ENCODE measurements at regions of chr2 and their contacts with region 1.

Region 1: DNA sequence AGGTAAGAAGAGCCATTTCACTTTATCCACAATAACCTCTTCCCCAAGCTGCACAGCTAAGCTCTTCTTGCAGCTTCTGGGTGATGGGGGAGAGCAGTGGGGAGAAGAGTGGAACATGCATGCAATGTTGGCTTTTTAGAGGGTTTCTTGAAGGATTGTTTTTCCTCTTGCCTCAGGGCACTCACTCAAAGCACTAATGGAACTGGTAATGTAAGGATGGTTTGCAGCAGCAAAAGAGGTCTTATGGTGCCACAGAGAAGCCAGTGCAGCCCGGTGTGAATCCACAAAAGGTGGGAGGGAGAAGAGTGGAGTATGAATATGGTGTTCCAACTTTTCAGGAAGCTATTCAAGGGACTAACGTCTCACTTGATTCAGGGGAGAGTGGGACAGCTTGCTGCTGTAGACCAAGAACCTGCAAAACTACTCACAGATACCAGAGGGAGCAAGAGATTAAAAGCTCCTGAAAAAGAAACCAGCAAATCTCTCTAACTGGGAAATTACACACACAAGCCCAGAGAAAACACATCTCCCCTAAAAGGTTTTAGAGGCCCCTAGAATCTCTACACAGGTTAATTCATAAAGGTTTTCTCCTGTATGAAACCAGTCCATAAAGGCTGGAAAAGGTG is 116.4 kb downstream of the CHN1 start:
- DNase-seq: peak; percentile 18
- ATAC-seq: peak; percentile 49; the same call in 1 of the 2 replicates
- H3K4me3 ChIP-seq: no peak overlapping the region
- H3K27ac ChIP-seq: no peak overlapping the region
- H3K4me1 ChIP-seq: no peaks in the 10 kb centered on the region
- H3K27me3 ChIP-seq: no peaks in the 10 kb centered on the region
- CTCF ChIP-seq: peak; percentile 22; the same call in 1 of the 2 replicates
- POLR2A ChIP-seq: no peak
- RAD21 ChIP-seq: peak; percentile 16; the same call in 1 of the 2 replicates

Region 2: GRCh38 chr2:174771631-174772471 is 116.9 kb before region 1 on chr2:
- CTCF ChIA-PET with region 1: interaction called, 6 read pairs
- POLR2A ChIA-PET with region 1: no interaction called
- dilution Hi-C with region 1: no loop called
- in situ Hi-C with region 1: no loop called
- intact Hi-C with region 1: loop called (anchors 1 kb)
- DNase-seq: peak; percentile 82
- ATAC-seq: peak; percentile 86
- H3K4me3 ChIP-seq: no peak overlapping the region
- H3K27ac ChIP-seq: peak overlapping the region; percentile 93
- H3K4me1 ChIP-seq: peaks cover 24% of the 10 kb centered on the region
- H3K27me3 ChIP-seq: no peaks in the 10 kb centered on the region
- CTCF ChIP-seq: peak; percentile 94
- POLR2A ChIP-seq: no peak
- RAD21 ChIP-seq: peak; percentile 94

Region 3: GRCh38 chr2:175030380-175031271 is 141.9 kb after region 1 on chr2:
- CTCF ChIA-PET with region 1: no interaction called
- POLR2A ChIA-PET with region 1: no interaction called
- dilution Hi-C with region 1: no loop called
- in situ Hi-C with region 1: no loop called
- intact Hi-C with region 1: no loop called
- DNase-seq: peak; percentile 58
- ATAC-seq: peak; percentile 96
- H3K4me3 ChIP-seq: no peak overlapping the region
- H3K27ac ChIP-seq: no peak overlapping the region
- H3K4me1 ChIP-seq: peaks cover 2% of the 10 kb centered on the region; the same call in 1 of the 2 replicates
- H3K27me3 ChIP-seq: no peaks in the 10 kb centered on the region
- CTCF ChIP-seq: peak; percentile 51
- POLR2A ChIP-seq: no peak
- RAD21 ChIP-seq: peak; percentile 71

Measured in IMR-90 (cell line).